Esophagus squamous epithelium (tissue), 5 donors: ENCODE measurements at regions of chr11 and their contacts with region 1.

Region 1: DNA sequence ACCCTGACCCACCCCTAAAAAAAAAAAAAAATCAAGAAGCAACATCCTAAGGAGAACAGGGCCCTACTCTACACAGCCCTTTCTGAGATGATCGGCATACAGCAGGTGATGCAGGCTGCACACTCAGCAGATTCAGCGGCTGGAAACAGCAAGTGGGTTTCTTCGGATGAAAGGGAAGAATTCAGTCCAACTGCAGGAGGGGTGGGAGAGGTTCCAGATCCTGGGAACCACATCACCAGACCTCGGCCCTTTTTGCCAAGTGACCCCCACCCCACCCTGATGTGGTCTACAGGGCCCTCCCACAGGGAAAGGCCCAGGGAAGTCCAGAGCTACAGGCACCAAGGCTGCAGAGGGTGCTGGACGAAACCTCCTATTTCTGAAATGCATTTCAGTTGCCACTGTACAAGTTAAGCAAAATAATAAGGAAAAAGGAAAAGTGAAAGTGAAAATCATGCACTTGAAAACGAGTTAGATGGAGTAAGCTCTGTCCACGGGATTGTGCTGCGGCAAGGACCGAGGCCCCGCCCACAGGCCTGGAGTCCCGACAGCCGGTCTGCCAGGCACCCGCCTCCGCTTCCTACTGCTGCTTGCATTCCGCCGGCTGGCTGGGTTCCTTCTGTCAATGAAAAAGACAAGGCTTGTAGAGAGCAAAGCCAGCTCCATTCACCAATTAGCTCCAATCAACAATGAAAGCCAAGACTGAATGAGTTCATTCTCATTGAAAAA is 16.0 kb upstream of the PHLDA2 start:
- DNase-seq: no peak
- H3K4me3 ChIP-seq: peak overlapping the region in 3 of 4 donors; percentile 9 to 47 (median 22)
- H3K27ac ChIP-seq: peak overlapping the region; percentile 25 to 73 (median 54)
- H3K4me1 ChIP-seq: peaks cover 26 to 52% (median 33%) of the 10 kb centered on the region in 3 donors
- H3K27me3 ChIP-seq: no peaks in the 10 kb centered on the region
- CTCF ChIP-seq: peak in 1 of 6 experiments; percentile 10
- POLR2A ChIP-seq: no peak

Region 2: DNA sequence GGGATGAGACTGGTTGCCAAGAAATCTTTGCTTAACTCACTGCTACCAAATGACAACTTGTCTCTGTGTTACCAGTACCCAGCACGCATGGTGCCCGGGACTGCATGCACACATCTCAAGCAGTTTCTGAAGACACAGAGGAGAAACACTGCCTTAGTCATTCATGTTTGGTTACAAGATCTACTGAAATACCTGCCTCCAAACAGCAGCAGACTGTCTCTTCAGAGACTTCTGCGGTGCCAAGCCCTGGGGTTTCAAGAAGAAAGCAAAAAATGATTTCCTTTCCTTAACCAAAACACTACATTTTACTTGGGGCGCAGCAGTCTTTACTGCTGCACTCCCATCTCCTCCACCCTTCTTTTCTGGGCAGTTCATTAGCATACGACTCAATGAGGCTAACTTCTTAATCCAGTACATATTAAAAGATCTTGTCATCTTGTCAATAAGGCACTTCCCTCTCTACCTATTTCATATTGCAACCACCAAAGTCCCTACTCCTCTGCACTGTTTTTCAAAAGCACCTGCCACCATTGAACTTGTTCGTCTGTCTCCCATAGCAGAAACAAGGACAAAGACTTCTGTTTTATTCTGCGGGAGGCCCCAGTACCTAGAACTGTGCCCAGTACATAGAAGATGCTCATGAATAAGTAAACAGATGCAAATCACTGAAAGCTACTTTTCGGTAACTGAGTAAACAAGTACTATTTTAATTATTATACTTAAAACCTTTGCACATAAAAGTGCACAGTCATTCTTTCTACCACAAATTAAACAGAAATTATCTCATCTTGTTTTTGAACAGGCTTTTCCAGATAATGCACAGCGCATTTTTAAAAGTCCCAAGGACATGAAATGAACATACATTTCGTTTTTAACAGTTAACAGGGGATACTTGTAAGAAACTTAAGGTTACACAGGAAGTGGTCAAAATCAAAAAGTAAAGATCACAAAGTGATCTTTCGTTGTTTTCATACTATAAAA is 43.0 kb after region 1 on chr11:
- intact Hi-C with region 1: no loop called
- DNase-seq: no peak
- H3K4me3 ChIP-seq: peak overlapping the region in 3 of 4 donors; percentile 22 to 91 (median 83)
- H3K27ac ChIP-seq: peak overlapping the region; percentile 69 to 99 (median 96)
- H3K4me1 ChIP-seq: peaks cover 11 to 84% (median 32%) of the 10 kb centered on the region in 3 donors
- H3K27me3 ChIP-seq: no peaks in the 10 kb centered on the region
- CTCF ChIP-seq: no peak
- POLR2A ChIP-seq: no peak

Region 3: DNA sequence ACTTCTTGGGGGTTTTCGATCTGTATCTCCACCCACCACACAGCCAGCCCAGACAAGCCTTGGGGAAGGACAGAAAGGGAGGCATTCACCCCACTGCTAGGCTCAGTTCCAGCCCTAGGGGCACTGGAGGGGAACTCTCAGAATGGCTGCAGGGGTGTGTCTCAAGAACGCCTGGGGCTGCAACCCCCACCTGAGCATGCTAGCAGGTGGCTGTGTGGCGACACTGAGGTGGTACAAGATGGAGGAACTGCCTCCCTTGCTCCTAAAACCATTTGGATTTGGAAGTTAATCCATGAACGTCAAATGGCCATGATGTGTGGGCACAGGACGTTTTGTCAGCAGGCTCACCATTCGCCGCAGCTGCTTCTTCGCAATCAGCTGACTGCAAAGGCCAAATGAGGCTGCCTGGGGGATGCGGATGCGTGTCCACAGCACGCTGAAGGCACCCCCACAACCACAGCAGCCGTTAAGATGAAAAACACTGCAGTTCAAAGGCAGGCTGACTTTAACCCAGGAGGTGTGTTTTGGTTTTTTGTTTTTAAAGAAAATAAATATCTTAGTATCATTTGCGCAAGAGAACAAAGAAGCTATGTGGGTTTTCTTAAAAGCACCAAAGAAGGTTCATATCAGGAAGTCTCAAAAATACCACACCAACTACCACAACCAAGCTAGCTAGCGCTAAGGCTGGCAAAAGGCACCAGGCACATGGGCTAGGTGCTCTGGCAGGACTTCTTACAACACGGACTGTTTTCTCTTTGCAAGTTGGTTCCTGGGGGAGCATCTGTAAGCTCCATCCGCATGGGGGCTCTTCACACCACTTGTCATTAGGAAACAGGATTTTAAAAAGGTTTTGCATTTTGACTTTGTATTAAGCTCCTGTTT is 69.1 kb after region 1 on chr11:
- intact Hi-C with region 1: loop called (anchors 10 kb)
- DNase-seq: no peak
- H3K4me3 ChIP-seq: no peak overlapping the region
- H3K27ac ChIP-seq: peak overlapping the region; percentile 9 to 76 (median 48)
- H3K4me1 ChIP-seq: peaks cover 0 to 30% (median 15%) of the 10 kb centered on the region in 3 donors
- H3K27me3 ChIP-seq: no peaks in the 10 kb centered on the region
- CTCF ChIP-seq: no peak
- POLR2A ChIP-seq: no peak

Region 4: GRCh38 chr11:3091791-3092602 is 146.8 kb after region 1 on chr11:
- intact Hi-C with region 1: no loop called
- DNase-seq: no peak
- H3K4me3 ChIP-seq: no peak overlapping the region
- H3K27ac ChIP-seq: no peak overlapping the region
- H3K4me1 ChIP-seq: peaks cover 0 to 21% (median 6%) of the 10 kb centered on the region in 3 donors
- H3K27me3 ChIP-seq: no peaks in the 10 kb centered on the region
- CTCF ChIP-seq: peak; percentile 97 to 100 (median 98)
- POLR2A ChIP-seq: no peak